Calu3 (cell line): ENCODE measurements at regions of chr10 and their contacts with region 1.

Region 1: GRCh38 chr10:80444646-80445319 is 9.3 kb upstream of the TSPAN14 start:
- DNase-seq: peak; percentile 66
- H3K4me3 Mint-ChIP-seq: no peak overlapping the region
- H3K27ac Mint-ChIP-seq: no peak overlapping the region
- H3K4me1 Mint-ChIP-seq: peaks cover 31% of the 10 kb centered on the region
- H3K27me3 Mint-ChIP-seq: peaks cover 20% of the 10 kb centered on the region
- CTCF ChIP-seq: peak; percentile 73

Region 2: DNA sequence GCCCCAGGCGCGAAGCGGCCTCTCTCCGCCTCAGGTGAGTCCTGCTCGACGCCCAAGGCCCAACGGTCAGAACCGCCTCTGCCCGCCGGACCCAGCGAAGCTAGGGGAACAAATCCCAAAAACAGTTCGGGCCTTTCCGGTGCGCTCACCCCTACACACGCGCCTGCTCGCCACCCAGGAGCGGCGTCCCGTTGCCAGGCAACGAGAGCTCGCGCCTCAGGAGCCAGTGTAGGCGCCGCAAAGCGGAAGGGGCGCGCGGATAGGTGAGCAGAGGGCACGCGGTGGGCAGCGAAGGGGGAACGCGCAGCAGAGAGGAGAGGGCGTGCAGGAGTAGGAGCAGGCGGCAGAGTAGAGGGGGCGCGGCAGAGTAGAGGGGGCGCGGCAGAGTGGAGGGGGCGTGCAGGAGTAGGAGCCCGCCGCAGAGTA is 88.2 kb before region 1 on chr10 and contains the starts of genes DYDC1 and DYDC2:
- CTCF ChIA-PET with region 1: no interaction called
- intact Hi-C with region 1: no loop called
- DNase-seq: peak; percentile 60
- H3K4me3 Mint-ChIP-seq: peak within 1 kb of the TSS; percentile 73
- H3K27ac Mint-ChIP-seq: no peak within 1 kb of the TSS
- H3K4me1 Mint-ChIP-seq: peaks cover 15% of the 10 kb centered on the region
- H3K27me3 Mint-ChIP-seq: peaks cover 73% of the 10 kb centered on the region
- CTCF ChIP-seq: no peak
- total RNA-seq, gene DYDC1: not detected in 2 replicates
- total RNA-seq, gene DYDC2: not detected in 2 replicates

Region 3: GRCh38 chr10:80416479-80417098 is 28.2 kb before region 1 on chr10:
- CTCF ChIA-PET with region 1: no interaction called
- intact Hi-C with region 1: no loop called
- DNase-seq: no peak
- H3K4me3 Mint-ChIP-seq: no peak overlapping the region
- H3K27ac Mint-ChIP-seq: no peak overlapping the region
- H3K4me1 Mint-ChIP-seq: peaks cover 39% of the 10 kb centered on the region
- H3K27me3 Mint-ChIP-seq: no peaks in the 10 kb centered on the region
- CTCF ChIP-seq: no peak

Region 4: GRCh38 chr10:80530251-80530650 is 85.5 kb after region 1 on chr10:
- CTCF ChIA-PET with region 1: interaction called, 6 read pairs
- intact Hi-C with region 1: loop called (anchors 1 kb)
- DNase-seq: peak; percentile 77
- H3K4me3 Mint-ChIP-seq: no peak overlapping the region
- H3K27ac Mint-ChIP-seq: no peak overlapping the region
- H3K4me1 Mint-ChIP-seq: no peaks in the 10 kb centered on the region
- H3K27me3 Mint-ChIP-seq: no peaks in the 10 kb centered on the region
- CTCF ChIP-seq: peak; percentile 72

Region 5: GRCh38 chr10:80599424-80599847 is 154.7 kb after region 1 on chr10:
- CTCF ChIA-PET with region 1: interaction called, 3 read pairs
- intact Hi-C with region 1: loop called (anchors 5 kb)
- DNase-seq: peak; percentile 63
- H3K4me3 Mint-ChIP-seq: no peak overlapping the region
- H3K27ac Mint-ChIP-seq: no peak overlapping the region
- H3K4me1 Mint-ChIP-seq: no peaks in the 10 kb centered on the region
- H3K27me3 Mint-ChIP-seq: peaks cover 31% of the 10 kb centered on the region
- CTCF ChIP-seq: peak; percentile 68